Natural killer cell (primary cell): ENCODE measurements at regions of chr2 and their contacts with region 1.

Region 1: GRCh38 chr2:30231212-30231995 is at the start of gene LBH:
- DNase-seq: peak; percentile 84 to 96
- ATAC-seq: peak; percentile 59 to 82 (median 66)
- H3K4me3 ChIP-seq: peak within 1 kb of the TSS; percentile 90
- H3K4me3 Mint-ChIP-seq: peak within 1 kb of the TSS; percentile 94
- H3K27ac ChIP-seq: peak within 1 kb of the TSS; percentile 96
- H3K27ac Mint-ChIP-seq: peak within 1 kb of the TSS; percentile 85 to 93
- H3K4me1 ChIP-seq: peaks cover 60% of the 10 kb centered on the region
- H3K4me1 Mint-ChIP-seq: peaks cover 53 to 73% of the 10 kb centered on the region in 2 donors
- H3K27me3 ChIP-seq: no peaks in the 10 kb centered on the region
- H3K27me3 Mint-ChIP-seq: no peaks in the 10 kb centered on the region
- CTCF ChIP-seq: no peak
- total RNA-seq, gene LBH: 157 to 197 (median 158) TPM

Region 2: DNA sequence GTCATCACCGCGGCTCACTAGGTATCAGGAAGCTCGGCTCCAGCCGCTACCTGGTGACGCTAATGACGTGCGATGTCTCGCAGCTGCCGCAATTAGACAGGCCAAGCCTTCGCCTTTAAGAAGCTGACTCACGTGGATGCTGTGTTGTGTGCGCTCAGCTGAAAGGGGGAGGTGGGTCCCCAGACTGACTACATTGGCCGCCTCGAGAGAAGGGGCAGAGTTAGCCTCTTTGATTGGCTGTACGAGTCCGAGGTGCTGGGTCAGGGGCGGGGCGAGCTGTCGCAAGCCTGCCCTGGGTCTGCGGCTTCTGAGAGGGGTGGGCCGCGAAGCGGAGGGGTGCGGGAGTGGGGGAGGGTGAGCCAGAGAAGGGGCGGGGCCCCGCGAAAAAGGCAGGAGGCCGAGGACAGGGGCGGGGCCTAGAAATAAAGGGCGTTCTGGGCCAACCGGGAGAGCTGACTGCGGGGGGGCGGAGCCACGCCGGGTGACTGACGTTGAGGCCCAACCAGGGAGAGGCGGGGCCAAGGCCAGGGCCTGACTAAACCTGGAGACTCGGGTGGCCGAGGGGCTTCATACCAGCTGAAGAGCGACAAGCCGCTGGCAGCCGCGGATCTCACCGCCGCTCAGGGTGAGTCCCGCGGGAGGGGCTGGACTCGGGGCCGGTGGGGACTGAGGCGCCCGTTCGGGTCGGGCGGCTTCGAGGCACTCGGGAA is 84.8 kb before region 1 on chr2 and contains the start of gene YPEL5:
- intact Hi-C with region 1: loop called (anchors 2 kb)
- DNase-seq: peak; percentile 99 to 100
- ATAC-seq: peak; percentile 77 to 93 (median 81)
- H3K4me3 ChIP-seq: peak within 1 kb of the TSS; percentile 65
- H3K4me3 Mint-ChIP-seq: peak within 1 kb of the TSS; percentile 92
- H3K27ac ChIP-seq: peak within 1 kb of the TSS; percentile 96
- H3K27ac Mint-ChIP-seq: peak within 1 kb of the TSS; percentile 98
- H3K4me1 ChIP-seq: peaks cover 8% of the 10 kb centered on the region
- H3K4me1 Mint-ChIP-seq: peaks cover 43 to 46% of the 10 kb centered on the region in 2 donors
- H3K27me3 ChIP-seq: no peaks in the 10 kb centered on the region
- H3K27me3 Mint-ChIP-seq: no peaks in the 10 kb centered on the region
- CTCF ChIP-seq: no peak
- total RNA-seq, gene YPEL5: 569 to 1,094 (median 800) TPM

Region 3: GRCh38 chr2:30266051-30266621 is 34.7 kb after region 1 on chr2:
- intact Hi-C with region 1: loop called (anchors 2 kb)
- DNase-seq: peak; percentile 53 to 85
- ATAC-seq: peak; percentile 86 to 92 (median 91)
- H3K4me3 ChIP-seq: no peak overlapping the region
- H3K4me3 Mint-ChIP-seq: peak overlapping the region; percentile 89
- H3K27ac ChIP-seq: peak overlapping the region; percentile 79
- H3K27ac Mint-ChIP-seq: peak overlapping the region; percentile 93 to 94
- H3K4me1 ChIP-seq: peaks cover 38% of the 10 kb centered on the region
- H3K4me1 Mint-ChIP-seq: peaks cover 62 to 63% of the 10 kb centered on the region in 2 donors
- H3K27me3 ChIP-seq: no peaks in the 10 kb centered on the region
- H3K27me3 Mint-ChIP-seq: no peaks in the 10 kb centered on the region
- CTCF ChIP-seq: no peak

Region 4: DNA sequence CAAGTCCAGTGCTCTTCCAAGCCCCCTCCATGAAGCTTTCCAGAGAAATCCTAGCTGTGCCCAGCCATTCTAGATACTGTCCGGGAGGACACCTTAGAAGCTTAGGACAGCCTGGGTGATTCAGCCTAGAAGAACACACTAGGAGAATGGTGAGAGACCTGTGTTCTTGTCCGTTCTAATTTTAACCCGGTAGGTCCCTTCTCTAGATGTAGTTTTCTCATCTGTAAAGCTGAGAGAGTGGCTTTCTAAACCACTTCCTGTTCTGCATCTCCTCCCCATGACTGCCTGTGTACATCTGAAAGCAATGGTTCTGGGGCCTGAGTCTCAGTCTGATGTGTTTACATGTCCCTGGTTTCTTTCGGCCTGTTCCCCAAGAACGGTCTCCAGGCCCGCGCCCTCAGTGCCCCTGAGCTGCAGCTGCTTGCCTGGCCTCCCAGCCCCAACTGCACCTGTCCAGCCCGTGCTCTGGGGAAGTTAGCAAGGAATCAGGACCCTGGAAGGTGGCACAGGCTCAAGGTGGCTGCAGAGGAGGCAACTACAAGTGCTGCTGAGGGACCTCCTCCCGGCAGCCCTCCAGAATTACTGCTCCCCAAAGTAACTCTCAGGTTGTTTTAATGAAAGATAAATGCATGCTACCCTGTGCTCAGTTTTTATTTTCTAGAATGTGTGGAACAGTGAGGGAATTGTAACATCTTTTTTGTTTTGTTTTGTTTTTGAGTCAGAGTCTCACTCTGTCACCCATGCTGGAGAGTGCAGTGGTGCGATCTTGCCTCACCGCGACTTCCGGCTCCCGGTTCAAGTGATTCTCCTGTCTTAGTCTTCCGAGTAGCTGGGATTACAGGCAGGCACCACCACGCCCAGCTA is 105.8 kb after region 1 on chr2:
- intact Hi-C with region 1: loop called (anchors 1 kb)
- DNase-seq: peak; percentile 29 to 79
- ATAC-seq: peak; percentile 84 to 90 (median 90)
- H3K4me3 ChIP-seq: peak overlapping the region; percentile 1
- H3K4me3 Mint-ChIP-seq: peak overlapping the region; percentile 91
- H3K27ac ChIP-seq: peak overlapping the region; percentile 79
- H3K27ac Mint-ChIP-seq: peak overlapping the region; percentile 97 to 98
- H3K4me1 ChIP-seq: peaks cover 67% of the 10 kb centered on the region
- H3K4me1 Mint-ChIP-seq: peaks cover 58 to 66% of the 10 kb centered on the region in 2 donors
- H3K27me3 ChIP-seq: no peaks in the 10 kb centered on the region
- H3K27me3 Mint-ChIP-seq: no peaks in the 10 kb centered on the region
- CTCF ChIP-seq: no peak

Region 5: DNA sequence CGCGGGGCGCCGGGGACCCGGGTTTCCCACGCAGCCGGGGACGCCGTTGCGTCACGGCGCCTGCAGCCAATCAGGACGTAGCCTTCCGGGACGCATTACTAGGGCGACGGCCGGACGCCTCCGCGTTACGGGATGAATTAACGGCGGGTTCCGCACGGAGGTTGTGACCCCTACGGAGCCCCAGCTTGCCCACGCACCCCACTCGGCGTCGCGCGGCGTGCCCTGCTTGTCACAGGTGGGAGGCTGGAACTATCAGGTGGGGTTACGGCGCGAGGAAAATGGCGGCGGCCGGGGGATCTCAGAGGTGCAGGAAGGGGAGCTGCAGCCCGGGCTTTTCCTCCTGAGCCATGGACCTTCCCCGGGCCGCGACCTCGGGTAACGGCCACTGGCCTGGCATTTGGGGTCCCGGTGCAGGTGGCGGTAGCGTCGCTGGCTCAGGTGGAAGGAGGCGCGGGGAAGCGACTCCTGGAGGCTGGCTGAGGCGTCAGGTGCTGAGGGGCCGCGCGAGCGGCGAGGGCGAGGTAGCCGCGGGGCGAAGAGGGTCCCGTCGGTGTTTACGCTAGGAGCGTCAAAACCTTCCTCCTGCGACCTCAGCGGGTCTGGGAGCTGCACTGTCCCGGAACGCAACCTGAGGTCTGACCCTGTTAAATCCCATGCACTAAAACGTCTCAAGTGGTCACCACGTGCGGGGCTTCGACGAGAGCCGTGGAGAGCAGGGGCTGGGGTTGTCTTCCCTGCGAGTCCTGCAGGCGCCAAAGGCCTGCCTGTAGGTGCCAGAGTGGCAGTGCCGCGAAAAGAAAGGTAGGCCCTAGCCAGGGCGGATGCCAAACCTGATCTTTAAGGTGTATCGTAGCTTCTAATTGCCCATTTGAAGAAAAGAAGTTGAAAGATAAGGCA is 216.0 kb after region 1 on chr2 and contains the start of gene LCLAT1:
- intact Hi-C with region 1: loop called (anchors 5 kb)
- DNase-seq: peak; percentile 87 to 94
- ATAC-seq: peak; percentile 91 to 94 (median 93)
- H3K4me3 ChIP-seq: peak within 1 kb of the TSS; percentile 99
- H3K4me3 Mint-ChIP-seq: peak within 1 kb of the TSS; percentile 98
- H3K27ac ChIP-seq: peak within 1 kb of the TSS; percentile 82
- H3K27ac Mint-ChIP-seq: peak within 1 kb of the TSS; percentile 98
- H3K4me1 ChIP-seq: peaks cover 11% of the 10 kb centered on the region
- H3K4me1 Mint-ChIP-seq: peaks cover 32 to 39% of the 10 kb centered on the region in 2 donors
- H3K27me3 ChIP-seq: no peaks in the 10 kb centered on the region
- H3K27me3 Mint-ChIP-seq: no peaks in the 10 kb centered on the region
- CTCF ChIP-seq: no peak
- total RNA-seq, gene LCLAT1: 13.0 to 16.2 (median 14.2) TPM